CD8-positive, alpha-beta T cell (primary cell): ENCODE measurements at regions of chr11 and their contacts with region 1.

Region 1: DNA sequence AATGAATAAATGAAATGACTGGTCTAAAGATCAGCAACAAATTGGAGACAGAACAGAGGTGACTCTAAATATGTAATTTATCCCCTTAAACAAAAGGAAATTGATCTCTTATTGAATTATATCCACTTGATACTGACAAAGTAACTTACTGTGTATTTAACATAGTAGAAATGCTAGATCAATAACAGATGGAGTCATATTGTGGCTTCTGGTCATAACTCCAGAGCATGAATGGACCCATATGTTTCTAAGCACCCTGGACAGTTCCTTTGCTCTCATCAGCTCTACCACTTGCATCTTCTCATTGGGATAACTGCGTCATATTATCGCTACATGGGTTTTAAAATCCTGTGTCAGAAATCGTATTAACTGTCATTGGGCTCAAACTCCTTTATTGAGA is 222.3 kb downstream of the ETS1 start:
- DNase-seq: peak in 2 of 9 experiments; percentile 54 to 56
- ATAC-seq: peak; percentile 46
- H3K4me3 ChIP-seq: no peak overlapping the region
- H3K4me3 Mint-ChIP-seq: no peak overlapping the region
- H3K27ac ChIP-seq: no peak overlapping the region
- H3K27ac Mint-ChIP-seq: no peak overlapping the region
- H3K4me1 ChIP-seq: no peaks in the 10 kb centered on the region
- H3K4me1 Mint-ChIP-seq: peaks cover 15% of the 10 kb centered on the region
- H3K27me3 ChIP-seq: no peaks in the 10 kb centered on the region
- H3K27me3 Mint-ChIP-seq: no peaks in the 10 kb centered on the region
- CTCF ChIP-seq: no peak

Region 2: GRCh38 chr11:128336203-128336602 is 28.8 kb before region 1 on chr11:
- CTCF ChIA-PET with region 1: no interaction called
- POLR2A ChIA-PET with region 1: no interaction called
- intact Hi-C with region 1: no loop called
- DNase-seq: no peak
- ATAC-seq: no peak
- H3K4me3 ChIP-seq: no peak overlapping the region
- H3K4me3 Mint-ChIP-seq: no peak overlapping the region
- H3K27ac ChIP-seq: no peak overlapping the region
- H3K27ac Mint-ChIP-seq: no peak overlapping the region
- H3K4me1 ChIP-seq: peaks cover 27% of the 10 kb centered on the region
- H3K4me1 Mint-ChIP-seq: peaks cover 58% of the 10 kb centered on the region
- H3K27me3 ChIP-seq: no peaks in the 10 kb centered on the region
- H3K27me3 Mint-ChIP-seq: no peaks in the 10 kb centered on the region
- CTCF ChIP-seq: no peak

Region 3: GRCh38 chr11:128379587-128380580 is 14.8 kb after region 1 on chr11:
- CTCF ChIA-PET with region 1: no interaction called
- POLR2A ChIA-PET with region 1: interaction called, 3 read pairs
- intact Hi-C with region 1: loop called in 1 of 2 experiments (anchors 2 kb)
- DNase-seq: peak in 6 of 9 experiments; percentile 8 to 56 (median 32)
- ATAC-seq: peak; percentile 85
- H3K4me3 ChIP-seq: no peak overlapping the region
- H3K4me3 Mint-ChIP-seq: no peak overlapping the region
- H3K27ac ChIP-seq: no peak overlapping the region
- H3K27ac Mint-ChIP-seq: peak overlapping the region; percentile 60
- H3K4me1 ChIP-seq: peaks cover 16% of the 10 kb centered on the region
- H3K4me1 Mint-ChIP-seq: peaks cover 31% of the 10 kb centered on the region
- H3K27me3 ChIP-seq: no peaks in the 10 kb centered on the region
- H3K27me3 Mint-ChIP-seq: no peaks in the 10 kb centered on the region
- CTCF ChIP-seq: no peak

Region 4: DNA sequence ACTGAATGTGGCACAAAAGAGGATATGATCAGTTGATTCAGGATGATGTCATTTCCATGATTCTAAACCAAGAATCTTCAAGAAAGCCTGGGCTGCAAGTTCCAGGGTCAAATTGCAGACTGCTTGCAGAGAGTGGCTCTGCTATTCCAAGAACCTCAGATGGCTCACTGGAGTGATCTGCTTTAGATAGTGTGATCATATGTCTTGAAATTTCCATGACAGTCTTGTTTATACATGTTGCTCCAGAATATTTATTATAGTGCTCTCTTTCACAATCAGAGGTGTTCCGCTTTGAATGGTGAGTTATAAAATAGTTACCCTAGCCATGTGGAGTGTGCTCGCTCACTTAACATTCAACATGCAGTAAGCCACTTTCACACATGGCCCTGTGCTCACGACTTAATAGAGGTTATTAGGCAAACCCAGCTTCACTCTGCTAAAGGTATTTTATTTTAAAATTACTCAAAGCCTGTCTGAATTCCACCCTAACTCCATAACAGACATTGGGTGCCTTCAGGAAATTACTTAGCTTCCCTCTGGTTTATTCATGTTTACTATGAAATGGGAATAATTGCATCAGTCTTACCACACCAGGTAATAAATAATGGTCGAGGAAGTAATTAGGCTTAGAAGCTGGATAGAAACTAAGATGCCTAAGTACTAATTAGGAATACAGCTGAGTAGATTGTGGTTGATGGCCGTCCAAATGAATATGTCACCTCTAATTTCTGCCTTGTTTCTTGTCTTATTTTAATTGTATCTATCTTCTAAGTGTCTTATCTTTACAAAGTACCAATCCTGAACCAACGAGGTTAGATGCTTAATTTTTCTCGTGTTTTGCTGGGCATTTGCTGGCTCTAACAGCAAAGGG is 34.4 kb after region 1 on chr11:
- CTCF ChIA-PET with region 1: no interaction called
- POLR2A ChIA-PET with region 1: interaction called, 3 read pairs
- intact Hi-C with region 1: loop called in 1 of 2 experiments (anchors 5 kb)
- DNase-seq: peak in 1 of 9 experiments; percentile 19
- ATAC-seq: no peak
- H3K4me3 ChIP-seq: no peak overlapping the region
- H3K4me3 Mint-ChIP-seq: no peak overlapping the region
- H3K27ac ChIP-seq: no peak overlapping the region
- H3K27ac Mint-ChIP-seq: no peak overlapping the region
- H3K4me1 ChIP-seq: peaks cover 11% of the 10 kb centered on the region
- H3K4me1 Mint-ChIP-seq: peaks cover 24% of the 10 kb centered on the region
- H3K27me3 ChIP-seq: no peaks in the 10 kb centered on the region
- H3K27me3 Mint-ChIP-seq: no peaks in the 10 kb centered on the region
- CTCF ChIP-seq: no peak

Region 5: GRCh38 chr11:128506999-128507611 is 142.1 kb after region 1 on chr11:
- CTCF ChIA-PET with region 1: no interaction called
- POLR2A ChIA-PET with region 1: no interaction called
- intact Hi-C with region 1: no loop called
- DNase-seq: peak in 4 of 9 experiments; percentile 51 to 65 (median 60)
- ATAC-seq: peak; percentile 30
- H3K4me3 ChIP-seq: peak overlapping the region; percentile 37 to 94
- H3K4me3 Mint-ChIP-seq: peak overlapping the region; percentile 84
- H3K27ac ChIP-seq: peak overlapping the region; percentile 48 to 75
- H3K27ac Mint-ChIP-seq: peak overlapping the region; percentile 98
- H3K4me1 ChIP-seq: peaks cover 100% of the 10 kb centered on the region
- H3K4me1 Mint-ChIP-seq: peaks cover 97% of the 10 kb centered on the region
- H3K27me3 ChIP-seq: no peaks in the 10 kb centered on the region
- H3K27me3 Mint-ChIP-seq: no peaks in the 10 kb centered on the region
- CTCF ChIP-seq: no peak